ENCODE measurements at regions of chr11 and their contacts with region 1.

Region 1: DNA sequence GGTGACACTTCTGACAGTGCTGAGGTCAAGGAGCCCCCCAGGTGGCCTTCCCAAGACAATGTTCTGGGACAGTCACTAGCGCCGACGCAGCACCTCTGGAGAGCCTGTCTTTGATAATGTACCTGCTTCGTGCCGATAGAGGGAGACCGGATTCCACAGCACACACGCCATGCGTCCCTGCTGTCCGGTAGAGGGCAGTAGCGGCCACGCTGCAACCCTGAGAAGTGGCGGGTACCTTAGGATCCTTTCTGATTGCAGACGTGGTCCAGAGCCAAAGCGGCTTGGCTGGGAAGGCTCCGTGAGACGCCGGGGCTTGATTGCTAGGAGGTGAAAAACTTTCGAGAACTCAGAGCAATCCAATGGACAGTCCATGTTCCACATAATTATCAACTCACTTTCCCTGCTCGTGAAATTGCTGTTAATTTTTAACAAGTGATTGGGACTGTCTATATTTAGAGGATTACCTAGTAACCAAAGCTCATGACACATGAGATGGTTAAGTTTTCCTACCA is 11.4 kb upstream of the BARX2 start:
- DNase-seq: peak; percentile 95 to 96
- H3K4me3 ChIP-seq: 0 out of 2 replicates have a peak overlapping the region, but pooled peaks have one; percentile 19
- H3K4me3 Mint-ChIP-seq: no peak overlapping the region
- H3K27ac Mint-ChIP-seq: no peak overlapping the region
- H3K4me1 ChIP-seq: peaks cover 10% of the 10 kb centered on the region; the same call in 1 of the 2 replicates
- H3K4me1 Mint-ChIP-seq: no peaks in the 10 kb centered on the region
- H3K27me3 ChIP-seq: no peaks in the 10 kb centered on the region
- H3K27me3 Mint-ChIP-seq: peaks cover 28% of the 10 kb centered on the region
- CTCF ChIP-seq: peak; percentile 100

Region 2: GRCh38 chr11:128884703-128885338 is 479.4 kb before region 1 on chr11:
- CTCF ChIA-PET with region 1: no interaction called
- POLR2A ChIA-PET with region 1: no interaction called
- intact Hi-C with region 1: loop called (anchors 5 kb)
- DNase-seq: peak; percentile 78 to 91
- H3K4me3 ChIP-seq: no peak overlapping the region
- H3K4me3 Mint-ChIP-seq: no peak overlapping the region
- H3K27ac Mint-ChIP-seq: no peak overlapping the region
- H3K4me1 ChIP-seq: no peaks in the 10 kb centered on the region; the same call in 1 of the 2 replicates
- H3K4me1 Mint-ChIP-seq: no peaks in the 10 kb centered on the region
- H3K27me3 ChIP-seq: no peaks in the 10 kb centered on the region; the same call in none of the 2 replicates
- H3K27me3 Mint-ChIP-seq: peaks cover 33% of the 10 kb centered on the region
- CTCF ChIP-seq: peak; percentile 96 to 97

Region 3: DNA sequence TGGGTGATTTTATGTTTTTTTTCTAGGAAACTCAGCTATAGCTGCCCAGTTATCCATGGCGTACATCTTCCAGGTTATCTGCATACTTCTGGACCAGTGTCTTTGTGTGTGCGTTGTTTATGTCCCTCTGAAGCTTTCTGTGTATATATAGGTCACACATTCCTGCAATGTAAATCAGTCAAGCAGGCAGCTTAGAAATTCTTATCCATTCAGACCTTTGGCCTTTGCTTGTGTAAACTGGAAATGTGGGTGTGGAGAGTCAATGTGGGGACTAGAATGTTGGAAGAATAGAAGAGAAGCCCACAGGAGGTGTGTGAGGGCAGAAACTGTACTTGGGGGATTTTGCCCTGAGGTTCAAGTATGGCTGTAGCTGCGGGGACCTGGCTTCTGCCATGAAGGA is 63.2 kb after region 1 on chr11:
- CTCF ChIA-PET with region 1: no interaction called
- POLR2A ChIA-PET with region 1: no interaction called
- intact Hi-C with region 1: loop called (anchors 1 kb)
- DNase-seq: peak; percentile 79 to 81
- H3K4me3 ChIP-seq: no peak overlapping the region
- H3K4me3 Mint-ChIP-seq: peak overlapping the region; percentile 32
- H3K27ac Mint-ChIP-seq: peak overlapping the region; percentile 54
- H3K4me1 ChIP-seq: peaks cover 63% of the 10 kb centered on the region
- H3K4me1 Mint-ChIP-seq: peaks cover 50% of the 10 kb centered on the region
- H3K27me3 ChIP-seq: no peaks in the 10 kb centered on the region
- H3K27me3 Mint-ChIP-seq: no peaks in the 10 kb centered on the region
- CTCF ChIP-seq: no peak

Region 4: GRCh38 chr11:129613071-129613470 is 248.9 kb after region 1 on chr11:
- CTCF ChIA-PET with region 1: interaction called, 7 read pairs
- POLR2A ChIA-PET with region 1: no interaction called
- intact Hi-C with region 1: loop called (anchors 1 kb)
- DNase-seq: no peak
- H3K4me3 ChIP-seq: no peak overlapping the region
- H3K4me3 Mint-ChIP-seq: no peak overlapping the region
- H3K27ac Mint-ChIP-seq: no peak overlapping the region
- H3K4me1 ChIP-seq: no peaks in the 10 kb centered on the region
- H3K4me1 Mint-ChIP-seq: no peaks in the 10 kb centered on the region
- H3K27me3 ChIP-seq: no peaks in the 10 kb centered on the region
- H3K27me3 Mint-ChIP-seq: no peaks in the 10 kb centered on the region
- CTCF ChIP-seq: no peak

Region 5: GRCh38 chr11:129695575-129696308 is 331.5 kb after region 1 on chr11:
- CTCF ChIA-PET with region 1: interaction called, 18 read pairs
- POLR2A ChIA-PET with region 1: no interaction called
- intact Hi-C with region 1: loop called (anchors 1 kb)
- DNase-seq: peak; percentile 76 to 83
- H3K4me3 ChIP-seq: no peak overlapping the region
- H3K4me3 Mint-ChIP-seq: no peak overlapping the region
- H3K27ac Mint-ChIP-seq: no peak overlapping the region
- H3K4me1 ChIP-seq: peaks cover 7% of the 10 kb centered on the region; the same call in 1 of the 2 replicates
- H3K4me1 Mint-ChIP-seq: peaks cover 5% of the 10 kb centered on the region
- H3K27me3 ChIP-seq: no peaks in the 10 kb centered on the region
- H3K27me3 Mint-ChIP-seq: no peaks in the 10 kb centered on the region
- CTCF ChIP-seq: peak; percentile 83 to 92

Region 6: DNA sequence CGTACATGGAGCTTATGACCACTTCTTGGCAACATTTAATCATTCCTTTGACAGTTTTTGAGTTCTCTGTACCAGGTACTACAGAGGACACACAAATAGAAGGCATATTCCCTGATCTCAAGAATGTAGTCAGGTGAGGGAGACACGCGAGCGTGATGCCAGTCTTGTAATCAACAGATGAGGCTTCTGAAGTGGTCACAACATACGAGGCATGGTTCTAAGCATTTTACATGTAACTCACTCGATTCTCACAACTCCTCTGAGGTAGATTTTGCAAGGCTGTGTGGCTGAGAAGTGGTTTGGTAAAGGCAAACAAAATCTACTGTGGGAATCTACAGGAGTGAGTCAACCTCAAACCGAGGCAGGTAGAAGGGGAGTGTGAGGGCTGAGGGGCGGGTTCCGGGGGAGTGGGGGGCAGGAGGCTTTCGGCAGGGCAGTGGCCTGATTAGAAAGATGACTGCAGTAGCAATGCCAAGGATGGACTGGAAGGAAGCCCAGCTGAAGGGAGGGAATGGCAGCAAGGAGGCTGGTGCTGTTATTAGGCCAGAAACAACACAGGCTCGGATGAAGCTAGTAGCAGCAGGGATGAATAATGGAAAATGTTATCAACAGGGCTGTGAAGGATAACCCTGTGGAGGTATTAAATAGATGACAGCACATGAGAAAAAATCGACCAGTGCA is 859.2 kb after region 1 on chr11:
- CTCF ChIA-PET with region 1: no interaction called
- POLR2A ChIA-PET with region 1: no interaction called
- intact Hi-C with region 1: no loop called
- DNase-seq: no peak
- H3K4me3 ChIP-seq: no peak overlapping the region
- H3K4me3 Mint-ChIP-seq: no peak overlapping the region
- H3K27ac Mint-ChIP-seq: no peak overlapping the region
- H3K4me1 ChIP-seq: peaks cover 5% of the 10 kb centered on the region; the same call in 1 of the 2 replicates
- H3K4me1 Mint-ChIP-seq: no peaks in the 10 kb centered on the region
- H3K27me3 ChIP-seq: no peaks in the 10 kb centered on the region
- H3K27me3 Mint-ChIP-seq: no peaks in the 10 kb centered on the region
- CTCF ChIP-seq: no peak

Measured in Caco-2 (cell line).